ENCODE measurements at regions of chr7 and their contacts with region 1.

Region 1: DNA sequence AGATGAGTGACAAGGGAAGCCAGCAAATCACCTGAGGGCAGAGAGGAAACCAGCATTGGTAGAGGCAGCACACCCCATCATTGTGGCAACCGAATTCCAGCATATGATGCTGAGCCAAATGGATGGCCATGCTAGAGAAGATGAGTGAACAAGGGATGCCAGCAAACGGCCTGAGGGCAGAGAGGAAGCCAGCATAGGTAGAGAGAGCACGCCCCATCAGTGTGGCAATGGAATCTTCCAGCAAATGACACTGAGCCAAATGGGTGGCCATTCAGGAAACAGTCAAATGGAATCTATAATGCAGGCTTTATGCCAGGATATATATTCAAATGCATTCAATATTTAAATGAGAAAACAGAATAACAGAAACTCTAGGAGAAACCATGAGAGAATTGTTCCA is 21.6 kb downstream of the PKD1L1 start:
- DNase-seq: no peak
- ATAC-seq: no peak
- H3K4me3 Mint-ChIP-seq: no peak overlapping the region
- H3K27ac Mint-ChIP-seq: no peak overlapping the region
- H3K4me1 Mint-ChIP-seq: peaks cover 21% of the 10 kb centered on the region
- H3K27me3 Mint-ChIP-seq: peaks cover 8% of the 10 kb centered on the region
- CTCF ChIP-seq: no peak

Region 2: GRCh38 chr7:47724335-47724982 is 202.2 kb before region 1 on chr7:
- CTCF ChIA-PET with region 1: no interaction called
- POLR2A ChIA-PET with region 1: no interaction called
- intact Hi-C with region 1: loop called (anchors 5 kb)
- DNase-seq: no peak
- ATAC-seq: no peak
- H3K4me3 Mint-ChIP-seq: peak overlapping the region; percentile 66
- H3K27ac Mint-ChIP-seq: peak overlapping the region; percentile 72
- H3K4me1 Mint-ChIP-seq: peaks cover 80% of the 10 kb centered on the region
- H3K27me3 Mint-ChIP-seq: no peaks in the 10 kb centered on the region
- CTCF ChIP-seq: no peak

Region 3: GRCh38 chr7:47882635-47883034 is 44.1 kb before region 1 on chr7:
- CTCF ChIA-PET with region 1: no interaction called
- POLR2A ChIA-PET with region 1: no interaction called
- intact Hi-C with region 1: loop called (anchors 5 kb)
- DNase-seq: no peak
- ATAC-seq: no peak
- H3K4me3 Mint-ChIP-seq: no peak overlapping the region
- H3K27ac Mint-ChIP-seq: no peak overlapping the region
- H3K4me1 Mint-ChIP-seq: no peaks in the 10 kb centered on the region
- H3K27me3 Mint-ChIP-seq: no peaks in the 10 kb centered on the region
- CTCF ChIP-seq: no peak

Measured in activated B cell treated with CpG ODN at 0.5 μM for 24 hours (primary cell).